ENCODE measurements at regions of chr20 and their contacts with region 1.

Region 1: GRCh38 chr20:60057123-60057801 is 99.0 kb downstream of the CDH26 start:
- DNase-seq: peak; percentile 59 to 80 (median 75)
- ATAC-seq: peak; percentile 33 to 53
- H3K4me3 ChIP-seq: no peak overlapping the region
- H3K27ac ChIP-seq: no peak overlapping the region
- H3K4me1 ChIP-seq: no peaks in the 10 kb centered on the region
- H3K27me3 ChIP-seq: no peaks in the 10 kb centered on the region

Region 2: DNA sequence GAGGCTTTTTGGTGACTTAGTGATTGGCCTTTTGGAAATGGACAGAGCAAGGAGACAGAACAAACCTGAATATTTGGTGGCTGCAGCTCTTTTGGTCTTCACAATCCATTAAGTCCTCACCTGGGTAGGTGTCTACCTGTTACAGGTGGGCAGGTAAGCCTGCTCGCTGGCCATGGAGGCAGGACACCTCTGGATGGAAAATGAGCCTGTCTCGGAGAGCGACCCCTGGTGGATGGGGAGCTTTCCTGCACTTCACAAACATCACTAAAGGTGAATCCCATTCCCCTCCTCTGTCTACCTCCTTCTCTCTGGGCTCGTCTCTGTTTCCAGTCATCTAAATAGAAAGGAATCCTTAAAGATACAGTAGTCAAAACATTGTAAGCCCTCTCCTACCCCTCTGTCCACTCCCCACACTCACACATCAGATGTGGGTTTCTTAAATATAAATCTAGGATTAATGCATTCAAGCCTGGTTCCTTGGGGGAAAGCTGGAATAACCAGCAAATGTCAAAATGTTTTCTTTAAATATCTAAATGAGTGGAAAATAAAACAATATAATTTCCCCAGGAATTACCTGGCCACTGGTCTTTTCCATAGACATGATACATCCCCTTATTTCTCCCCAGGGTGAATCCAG is 205.8 kb after region 1 on chr20:
- intact Hi-C with region 1: loop called in 1 of 4 experiments (anchors 10 kb)
- DNase-seq: peak; percentile 20 to 52 (median 34)
- ATAC-seq: no peak
- H3K4me3 ChIP-seq: no peak overlapping the region
- H3K27ac ChIP-seq: no peak overlapping the region
- H3K4me1 ChIP-seq: no peaks in the 10 kb centered on the region
- H3K27me3 ChIP-seq: no peaks in the 10 kb centered on the region

Region 3: DNA sequence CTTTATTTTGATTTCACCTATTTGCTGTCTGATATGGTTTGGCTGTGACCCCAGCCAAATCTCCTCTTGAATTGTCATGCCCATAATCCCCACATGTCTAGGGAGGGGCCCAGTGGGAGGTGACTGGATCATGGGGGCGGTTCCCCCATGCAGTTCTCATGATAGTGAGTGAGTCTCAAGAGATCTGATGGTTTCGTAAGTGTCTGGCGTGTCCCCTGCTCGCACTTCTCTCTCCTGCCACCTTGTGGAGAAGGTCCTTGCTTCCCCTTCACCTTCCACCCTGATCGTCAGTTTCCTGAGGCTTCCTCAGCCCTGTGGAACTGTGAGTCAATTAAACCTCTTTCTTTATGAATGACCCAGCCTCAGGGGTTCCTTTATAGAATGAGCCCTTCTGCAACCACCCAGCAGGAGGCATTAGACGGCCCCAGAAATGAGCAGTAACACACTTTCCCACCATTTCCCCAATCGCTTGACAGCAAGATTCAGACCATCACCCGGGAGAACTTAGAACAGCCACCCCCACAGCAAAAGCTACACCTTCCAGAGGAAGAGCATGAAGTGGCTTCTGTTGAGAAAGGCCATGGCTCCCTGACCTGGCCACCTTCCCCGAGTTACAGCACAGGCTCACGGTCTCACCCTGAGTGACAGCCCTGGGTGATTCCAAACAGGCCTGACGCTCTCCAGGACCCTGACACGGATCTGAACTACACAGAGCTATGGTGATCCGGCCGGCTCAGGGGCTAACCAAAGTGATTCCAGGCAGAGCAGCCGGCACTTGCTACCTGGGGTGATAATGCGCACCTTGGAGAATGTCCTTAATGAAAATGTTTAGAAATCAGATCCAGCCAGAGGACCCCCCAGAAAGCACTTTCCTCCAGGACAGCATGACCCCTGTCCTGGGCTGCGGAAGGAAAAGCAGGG is 1063.6 kb after region 1 on chr20:
- intact Hi-C with region 1: loop called in 1 of 4 experiments (anchors 5 kb)
- DNase-seq: peak in 1 of 3 donors; percentile 57
- ATAC-seq: peak; percentile 52 to 54
- H3K4me3 ChIP-seq: no peak overlapping the region
- H3K27ac ChIP-seq: no peak overlapping the region
- H3K4me1 ChIP-seq: no peaks in the 10 kb centered on the region
- H3K27me3 ChIP-seq: no peaks in the 10 kb centered on the region